AG04449 (cell line): ENCODE measurements at regions of chr1 and their contacts with region 1.

Region 1: GRCh38 chr1:92004129-92004528 is 25.7 kb upstream of the EPHX4 start:
- DNase-seq: no peak
- H3K4me3 ChIP-seq: no peak overlapping the region
- CTCF ChIP-seq: no peak

Region 2: DNA sequence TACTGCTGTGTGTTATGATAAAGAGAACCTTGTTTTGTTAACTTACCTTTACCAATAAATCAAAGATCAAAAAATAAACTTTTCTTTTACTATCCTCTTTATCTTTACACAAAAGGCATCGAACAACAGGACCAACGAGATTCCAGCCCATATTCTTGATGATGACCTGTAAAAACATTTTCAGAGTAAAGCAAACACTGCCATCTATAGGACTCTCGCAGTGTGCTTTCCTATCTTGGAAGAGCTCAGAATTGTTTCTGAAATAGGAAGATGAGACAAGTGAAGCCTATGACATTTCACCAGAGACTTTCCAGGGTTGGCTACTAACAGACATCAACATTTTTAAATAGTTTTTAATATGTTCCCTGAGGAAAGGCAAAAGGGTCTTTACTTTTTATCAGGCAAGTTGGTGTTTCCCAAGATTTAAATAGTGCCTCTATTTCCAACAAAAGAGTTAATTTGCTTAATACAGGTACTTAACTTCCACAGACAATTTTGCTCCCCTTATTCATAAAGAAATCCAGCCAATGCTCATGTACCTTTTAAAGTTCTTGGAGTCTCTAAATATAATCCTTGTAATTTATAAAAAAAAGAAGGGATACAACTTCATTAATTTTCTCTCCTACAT is 287.4 kb after region 1 on chr1:
- CTCF ChIA-PET with region 1: interaction called, 163 read pairs
- POLR2A ChIA-PET with region 1: no interaction called
- DNase-seq: peak; percentile 17
- H3K4me3 ChIP-seq: no peak overlapping the region
- CTCF ChIP-seq: peak; percentile 64

Region 3: DNA sequence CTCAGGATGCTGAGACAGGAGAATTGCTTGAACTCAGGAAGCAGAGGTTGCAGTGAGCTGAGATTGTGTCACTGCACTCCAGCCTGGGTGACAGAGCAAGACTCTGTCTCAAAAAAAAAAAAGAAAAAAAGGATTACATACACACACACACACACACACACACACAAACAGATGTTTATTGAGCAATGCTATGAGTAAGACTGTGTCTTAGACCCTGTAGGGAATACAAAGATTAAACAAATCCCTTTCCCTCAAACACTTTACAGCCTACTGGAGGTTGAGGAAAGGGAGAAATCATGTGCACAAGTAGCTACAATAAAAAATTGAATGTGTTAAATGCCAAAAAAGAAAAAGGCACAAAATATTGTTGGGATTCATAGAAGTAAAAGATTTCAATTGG is 352.8 kb after region 1 on chr1:
- CTCF ChIA-PET with region 1: no interaction called
- POLR2A ChIA-PET with region 1: no interaction called
- DNase-seq: peak; percentile 33
- H3K4me3 ChIP-seq: no peak overlapping the region
- CTCF ChIP-seq: no peak